ENCODE measurements at regions of chr19 and their contacts with region 1.

Region 1: GRCh38 chr19:55494172-55494761 is 6.0 kb downstream of the SSC5D start:
- DNase-seq: peak in 1 of 2 donors; percentile 65
- H3K4me3 ChIP-seq: peak overlapping the region in 2 of 4 donors; percentile 14 to 25
- H3K27ac ChIP-seq: peak overlapping the region in 4 of 5 donors; percentile 31 to 96 (median 60)
- H3K4me1 ChIP-seq: peaks cover 0 to 63% (median 28%) of the 10 kb centered on the region in 4 donors
- H3K27me3 ChIP-seq: peaks cover 0 to 55% (median 11%) of the 10 kb centered on the region in 3 donors
- CTCF ChIP-seq: no peak
- EP300 ChIP-seq: no peak
- POLR2A ChIP-seq: no peak

Region 2: GRCh38 chr19:55146078-55146704 is 348.1 kb before region 1 on chr19:
- intact Hi-C with region 1: loop called (anchors 10 kb)
- DNase-seq: no peak
- H3K4me3 ChIP-seq: peak overlapping the region in 2 of 4 donors; percentile 4 to 23
- H3K27ac ChIP-seq: no peak overlapping the region
- H3K4me1 ChIP-seq: peaks cover 3 to 26% (median 18%) of the 10 kb centered on the region in 4 donors
- H3K27me3 ChIP-seq: peaks cover 27 to 100% (median 89%) of the 10 kb centered on the region in 3 donors
- CTCF ChIP-seq: peak in 2 of 7 experiments; percentile 7 to 27
- EP300 ChIP-seq: no peak
- POLR2A ChIP-seq: no peak

Region 3: DNA sequence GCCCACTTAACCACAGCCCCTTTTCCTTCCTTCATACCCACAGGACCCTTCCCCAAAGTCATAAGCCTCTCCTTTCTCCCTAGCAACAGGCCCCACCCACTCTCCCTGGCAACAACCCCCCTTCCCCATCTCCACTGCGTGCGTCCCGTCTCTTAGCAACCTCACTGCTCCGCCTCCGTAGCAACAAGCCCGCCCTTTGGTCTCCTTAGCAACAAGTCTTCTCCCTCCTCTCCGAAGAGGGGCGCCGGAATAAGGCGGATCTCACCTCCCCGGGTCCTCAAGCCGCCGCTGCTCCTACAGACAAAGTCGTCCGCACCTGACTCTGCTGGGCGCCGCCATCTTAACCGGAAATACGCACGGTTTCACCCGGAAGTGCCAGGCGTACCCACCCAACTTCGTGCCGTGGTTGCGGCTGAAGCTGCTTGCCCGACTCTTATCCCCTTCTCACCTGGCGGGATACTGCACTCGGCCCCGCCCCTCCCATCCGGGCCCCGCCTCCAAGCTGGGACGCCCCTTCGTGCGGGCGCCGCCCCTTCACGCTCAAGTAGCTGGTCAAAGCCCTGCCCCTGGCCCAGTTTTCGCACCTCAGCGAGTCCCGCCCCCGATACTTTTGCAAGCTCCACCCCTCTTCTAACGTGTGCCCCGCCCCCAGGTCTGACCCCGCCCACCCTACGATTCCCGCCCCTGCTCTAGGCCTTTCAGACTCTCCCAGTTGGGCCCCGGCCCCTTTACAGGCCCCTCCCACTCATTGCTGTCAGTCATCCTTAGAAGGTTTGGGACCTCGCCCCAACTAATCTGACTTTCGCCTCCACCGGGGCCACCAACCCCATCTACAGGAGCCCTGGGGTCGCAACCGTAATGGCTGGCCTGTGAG is 214.3 kb before region 1 on chr19 and contains the start of gene HSPBP1:
- intact Hi-C with region 1: loop called (anchors 10 kb)
- DNase-seq: peak; percentile 97 to 99
- H3K4me3 ChIP-seq: peak within 1 kb of the TSS; percentile 73 to 86 (median 84)
- H3K27ac ChIP-seq: peak within 1 kb of the TSS; percentile 69 to 89 (median 78)
- H3K4me1 ChIP-seq: peaks cover 14 to 50% (median 27%) of the 10 kb centered on the region in 4 donors
- H3K27me3 ChIP-seq: peaks cover 0 to 28% (median 10%) of the 10 kb centered on the region in 3 donors
- CTCF ChIP-seq: peak in 1 of 7 experiments; percentile 10
- EP300 ChIP-seq: no peak
- POLR2A ChIP-seq: no peak
- total RNA-seq, gene HSPBP1: 5.3 to 69.2 (median 14.9) TPM